Ascending aorta (tissue), 2 donors: ENCODE measurements at regions of chr10 and their contacts with region 1.

Region 1: GRCh38 chr10:6416892-6417512 is 163.1 kb downstream of the PRKCQ start:
- DNase-seq: no peak
- H3K4me3 ChIP-seq: no peak overlapping the region
- H3K27ac ChIP-seq: no peak overlapping the region
- H3K4me1 ChIP-seq: no peaks in the 10 kb centered on the region
- H3K27me3 ChIP-seq: no peaks in the 10 kb centered on the region
- CTCF ChIP-seq: peak; percentile 33 to 59 (median 48)

Region 2: DNA sequence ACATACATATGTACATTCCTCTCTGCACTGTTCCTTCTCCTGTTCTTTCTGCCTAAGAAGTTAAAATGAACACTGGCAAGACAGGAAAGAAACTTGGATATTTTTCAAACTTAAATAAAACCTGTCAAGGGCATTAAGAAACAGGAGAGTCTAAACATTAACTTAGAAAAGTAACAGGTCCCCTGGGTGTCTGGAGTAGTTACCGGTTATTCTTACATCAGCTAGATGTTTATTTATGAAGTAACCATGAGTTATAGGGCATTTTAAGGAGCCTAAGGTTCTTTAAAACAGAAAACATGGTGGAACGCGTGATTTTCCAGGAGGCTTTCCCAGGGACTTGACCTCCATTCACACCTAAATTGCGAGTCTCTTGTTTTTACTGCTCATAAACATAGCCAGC is 14.9 kb after region 1 on chr10:
- intact Hi-C with region 1: no loop called
- DNase-seq: no peak
- H3K4me3 ChIP-seq: no peak overlapping the region
- H3K27ac ChIP-seq: no peak overlapping the region
- H3K4me1 ChIP-seq: no peaks in the 10 kb centered on the region
- H3K27me3 ChIP-seq: no peaks in the 10 kb centered on the region
- CTCF ChIP-seq: no peak

Region 3: DNA sequence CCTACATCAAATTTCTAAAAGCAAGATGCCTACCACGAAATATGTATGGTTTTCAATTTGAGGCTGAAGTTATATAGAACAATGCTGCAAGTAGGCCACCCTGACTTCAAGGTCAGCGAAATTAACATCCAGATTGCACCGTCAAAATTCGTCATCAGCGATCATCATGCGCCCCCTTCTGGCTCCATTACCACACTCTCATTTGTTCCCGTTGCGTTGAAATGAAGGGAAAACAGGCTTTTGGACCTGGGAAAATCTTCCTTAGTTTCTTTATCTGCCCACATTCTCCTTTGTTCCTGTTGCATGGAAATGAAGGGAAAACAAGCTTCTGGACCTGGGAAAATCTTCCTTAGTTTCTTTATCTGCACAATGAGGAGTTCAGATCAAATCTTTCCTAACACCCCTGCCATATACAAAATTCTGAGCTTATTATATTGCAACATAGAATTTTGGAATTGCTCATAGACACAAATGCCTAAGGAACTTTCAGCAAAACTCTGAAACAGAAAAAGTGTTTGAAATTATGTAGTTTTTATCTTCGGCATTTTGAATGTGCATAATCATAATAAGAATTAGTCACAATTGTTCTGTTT is 261.3 kb after region 1 on chr10:
- intact Hi-C with region 1: loop called (anchors 2 kb)
- DNase-seq: peak in 1 of 2 donors; percentile 70
- H3K4me3 ChIP-seq: no peak overlapping the region
- H3K27ac ChIP-seq: no peak overlapping the region
- H3K4me1 ChIP-seq: no peaks in the 10 kb centered on the region
- H3K27me3 ChIP-seq: no peaks in the 10 kb centered on the region
- CTCF ChIP-seq: peak; percentile 39 to 63 (median 55)